ENCODE measurements at regions of chr9 and their contacts with region 1.

Region 1: GRCh38 chr9:126558051-126558665 is 55.6 kb upstream of the LMX1B start:
- DNase-seq: peak; percentile 70 to 78
- H3K4me3 ChIP-seq: no peak overlapping the region
- H3K4me3 Mint-ChIP-seq: no peak overlapping the region
- H3K27ac Mint-ChIP-seq: no peak overlapping the region
- H3K4me1 ChIP-seq: no peaks in the 10 kb centered on the region
- H3K4me1 Mint-ChIP-seq: no peaks in the 10 kb centered on the region
- H3K27me3 ChIP-seq: peaks cover 3% of the 10 kb centered on the region; the same call in 1 of the 2 replicates
- H3K27me3 Mint-ChIP-seq: peaks cover 16% of the 10 kb centered on the region
- CTCF ChIP-seq: peak; percentile 89 to 97

Region 2: DNA sequence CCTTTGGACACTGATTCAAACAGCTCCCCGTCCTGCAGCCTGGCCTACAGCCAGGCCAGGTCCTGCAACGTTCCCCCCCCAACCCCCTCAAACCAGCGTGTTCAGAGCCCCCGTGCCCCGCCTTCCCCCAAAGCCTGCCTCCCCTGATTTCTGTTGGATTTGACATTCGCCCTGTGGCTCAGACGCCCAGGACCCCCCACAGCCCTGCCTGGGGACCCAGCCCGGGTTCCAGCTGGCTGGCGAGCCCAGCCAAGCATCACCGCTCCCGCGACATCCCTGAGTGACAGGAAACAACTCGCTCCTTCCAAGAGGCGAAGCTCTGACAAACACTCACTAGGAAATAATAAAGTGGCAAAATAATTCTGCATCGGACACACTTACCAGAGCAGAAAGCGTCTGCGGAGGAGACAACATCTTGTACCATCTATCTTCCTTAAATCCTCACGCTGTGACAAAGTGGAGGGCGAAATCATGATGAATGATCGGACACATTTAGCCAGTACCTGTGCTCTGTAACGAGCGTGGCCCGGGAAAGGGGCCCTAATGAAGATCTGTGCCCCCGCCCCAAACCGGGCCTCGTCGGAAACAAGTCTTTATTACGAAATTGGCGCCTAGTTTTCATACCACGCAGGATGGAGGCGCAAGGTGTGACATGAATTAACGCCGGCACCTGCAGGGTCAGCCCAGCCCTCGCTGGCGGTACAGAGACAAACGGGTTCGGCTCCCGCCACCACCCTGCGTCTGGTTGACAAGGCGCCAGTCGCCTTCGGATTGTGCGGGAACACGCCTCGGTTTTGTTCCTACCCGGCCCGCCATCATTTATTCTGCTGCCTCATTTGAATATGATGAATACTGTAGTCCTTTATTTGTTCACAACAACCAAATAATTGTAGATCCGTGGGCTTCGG is 322.6 kb before region 1 on chr9:
- CTCF ChIA-PET with region 1: no interaction called
- POLR2A ChIA-PET with region 1: no interaction called
- intact Hi-C with region 1: no loop called
- DNase-seq: no peak
- H3K4me3 ChIP-seq: no peak overlapping the region
- H3K4me3 Mint-ChIP-seq: no peak overlapping the region
- H3K27ac Mint-ChIP-seq: no peak overlapping the region
- H3K4me1 ChIP-seq: no peaks in the 10 kb centered on the region
- H3K4me1 Mint-ChIP-seq: no peaks in the 10 kb centered on the region
- H3K27me3 ChIP-seq: no peaks in the 10 kb centered on the region; the same call in 1 of the 2 replicates
- H3K27me3 Mint-ChIP-seq: peaks cover 2% of the 10 kb centered on the region
- CTCF ChIP-seq: no peak

Region 3: DNA sequence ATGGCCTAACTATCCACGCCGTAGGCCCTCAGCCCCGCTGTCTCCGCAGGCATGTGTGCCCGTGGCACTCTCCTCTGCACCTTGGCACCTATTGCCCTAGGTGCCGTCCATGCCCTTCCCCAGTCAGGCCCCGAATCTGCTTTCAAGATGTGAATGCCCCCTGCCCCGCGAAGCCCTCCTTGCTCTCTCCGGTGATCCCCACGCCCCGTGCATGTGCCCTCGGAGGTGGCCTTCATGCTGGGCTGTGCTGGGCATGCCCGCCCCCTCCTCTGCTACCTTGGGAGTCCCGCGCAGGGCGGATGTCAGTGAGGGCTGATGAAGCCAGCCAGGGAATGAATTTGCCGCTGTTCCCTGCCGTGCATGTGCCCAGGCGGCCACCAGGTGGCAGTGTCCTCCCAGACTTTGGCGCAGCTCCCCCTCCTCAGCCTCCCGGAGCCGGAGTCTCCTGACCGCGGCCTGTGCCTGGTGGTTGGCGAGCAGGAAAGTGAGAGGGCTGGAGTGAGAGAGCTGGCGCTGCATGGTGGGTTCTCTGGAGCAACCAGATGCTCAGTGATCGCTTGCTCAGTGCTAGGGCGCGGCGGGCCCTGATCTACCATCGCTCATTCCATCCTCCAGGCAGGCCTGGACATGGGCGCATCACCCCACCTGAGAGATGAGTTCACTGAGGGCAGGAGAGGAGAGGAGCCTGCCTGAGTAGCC is 57.3 kb before region 1 on chr9:
- CTCF ChIA-PET with region 1: interaction called, 23 read pairs
- POLR2A ChIA-PET with region 1: interaction called, 11 read pairs
- intact Hi-C with region 1: loop called (anchors 1 kb)
- DNase-seq: peak; percentile 69 to 76
- H3K4me3 ChIP-seq: no peak overlapping the region
- H3K4me3 Mint-ChIP-seq: no peak overlapping the region
- H3K27ac Mint-ChIP-seq: no peak overlapping the region
- H3K4me1 ChIP-seq: peaks cover 8% of the 10 kb centered on the region
- H3K4me1 Mint-ChIP-seq: no peaks in the 10 kb centered on the region
- H3K27me3 ChIP-seq: no peaks in the 10 kb centered on the region
- H3K27me3 Mint-ChIP-seq: no peaks in the 10 kb centered on the region
- CTCF ChIP-seq: peak; percentile 85 to 93

Region 4: DNA sequence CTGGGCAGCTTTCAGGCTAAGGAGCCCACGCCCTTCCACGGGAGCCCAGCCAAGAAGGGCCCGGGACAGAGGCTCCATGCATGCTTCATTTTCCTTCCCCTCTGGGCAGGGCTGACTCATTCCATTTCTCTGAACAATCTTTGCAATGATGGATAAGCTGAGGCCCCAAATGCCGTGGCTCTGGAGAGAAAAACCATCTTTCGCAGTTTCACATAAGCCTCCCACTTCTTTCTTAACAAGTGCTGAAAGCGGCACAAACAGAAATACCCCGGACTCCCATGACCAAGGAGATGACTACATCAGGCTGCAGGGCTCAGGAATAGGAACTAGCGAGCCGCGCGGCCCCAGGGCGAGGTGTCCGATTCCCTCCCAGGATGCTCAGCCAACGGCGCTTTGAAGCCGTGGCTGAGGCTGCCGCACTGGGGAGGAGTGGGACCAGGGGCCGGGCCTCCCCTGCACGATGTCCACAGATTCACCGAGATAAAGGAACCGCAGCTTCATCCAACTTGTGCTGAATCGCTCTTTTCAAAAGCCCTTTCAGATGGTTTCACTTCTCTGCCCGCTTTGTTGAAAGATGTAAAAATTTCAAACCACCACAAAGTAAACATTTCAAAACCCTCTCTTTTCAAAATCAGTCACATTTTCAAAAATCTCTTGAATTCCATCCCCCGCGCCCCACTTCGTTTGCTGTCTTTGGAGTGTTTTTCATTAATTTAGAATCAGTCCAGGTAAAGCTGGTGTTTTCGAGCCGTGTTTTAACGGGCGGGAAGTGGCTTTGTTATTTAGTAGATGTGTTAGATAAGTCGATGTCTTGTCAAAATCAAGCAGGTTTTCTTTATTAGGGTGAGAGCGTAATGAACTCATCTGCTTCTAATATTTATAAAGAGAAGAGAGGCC is 41.0 kb before region 1 on chr9:
- CTCF ChIA-PET with region 1: interaction called, 3 read pairs
- POLR2A ChIA-PET with region 1: no interaction called
- intact Hi-C with region 1: loop called (anchors 5 kb)
- DNase-seq: peak; percentile 47 to 59
- H3K4me3 ChIP-seq: no peak overlapping the region
- H3K4me3 Mint-ChIP-seq: peak overlapping the region; percentile 60
- H3K27ac Mint-ChIP-seq: no peak overlapping the region
- H3K4me1 ChIP-seq: peaks cover 13% of the 10 kb centered on the region
- H3K4me1 Mint-ChIP-seq: peaks cover 6% of the 10 kb centered on the region
- H3K27me3 ChIP-seq: peaks cover 2% of the 10 kb centered on the region
- H3K27me3 Mint-ChIP-seq: peaks cover 20% of the 10 kb centered on the region
- CTCF ChIP-seq: no peak

Region 5: GRCh38 chr9:126781186-126782052 is 223.3 kb after region 1 on chr9:
- CTCF ChIA-PET with region 1: interaction called, 10 read pairs
- POLR2A ChIA-PET with region 1: no interaction called
- intact Hi-C with region 1: no loop called
- DNase-seq: peak; percentile 86 to 93
- H3K4me3 ChIP-seq: no peak overlapping the region
- H3K4me3 Mint-ChIP-seq: peak overlapping the region; percentile 48
- H3K27ac Mint-ChIP-seq: no peak overlapping the region
- H3K4me1 ChIP-seq: no peaks in the 10 kb centered on the region
- H3K4me1 Mint-ChIP-seq: no peaks in the 10 kb centered on the region
- H3K27me3 ChIP-seq: no peaks in the 10 kb centered on the region
- H3K27me3 Mint-ChIP-seq: no peaks in the 10 kb centered on the region
- CTCF ChIP-seq: peak; percentile 95 to 96